Esophagus muscularis mucosa (tissue), 4 donors: ENCODE measurements at regions of chr2 and their contacts with region 1.

Region 1: GRCh38 chr2:41869542-41870264 is 178.1 kb upstream of the PKDCC start:
- DNase-seq: no peak
- H3K4me3 ChIP-seq: no peak overlapping the region
- H3K27ac ChIP-seq: no peak overlapping the region
- H3K4me1 ChIP-seq: peaks cover 0 to 21% (median 18%) of the 10 kb centered on the region in 4 donors
- H3K27me3 ChIP-seq: no peaks in the 10 kb centered on the region
- CTCF ChIP-seq: peak; percentile 87 to 89 (median 88)
- EP300 ChIP-seq: no peak
- POLR2A ChIP-seq: no peak

Region 2: GRCh38 chr2:41500895-41501294 is 368.8 kb before region 1 on chr2:
- intact Hi-C with region 1: no loop called
- DNase-seq: no peak
- H3K4me3 ChIP-seq: no peak overlapping the region
- H3K27ac ChIP-seq: no peak overlapping the region
- H3K4me1 ChIP-seq: no peaks in the 10 kb centered on the region
- H3K27me3 ChIP-seq: no peaks in the 10 kb centered on the region
- CTCF ChIP-seq: no peak
- EP300 ChIP-seq: no peak
- POLR2A ChIP-seq: no peak

Region 3: GRCh38 chr2:41579806-41580205 is 289.9 kb before region 1 on chr2:
- intact Hi-C with region 1: no loop called
- DNase-seq: no peak
- H3K4me3 ChIP-seq: no peak overlapping the region
- H3K27ac ChIP-seq: no peak overlapping the region
- H3K4me1 ChIP-seq: peaks cover 0 to 12% (median 0%) of the 10 kb centered on the region in 4 donors
- H3K27me3 ChIP-seq: no peaks in the 10 kb centered on the region
- CTCF ChIP-seq: no peak
- EP300 ChIP-seq: no peak
- POLR2A ChIP-seq: no peak

Region 4: DNA sequence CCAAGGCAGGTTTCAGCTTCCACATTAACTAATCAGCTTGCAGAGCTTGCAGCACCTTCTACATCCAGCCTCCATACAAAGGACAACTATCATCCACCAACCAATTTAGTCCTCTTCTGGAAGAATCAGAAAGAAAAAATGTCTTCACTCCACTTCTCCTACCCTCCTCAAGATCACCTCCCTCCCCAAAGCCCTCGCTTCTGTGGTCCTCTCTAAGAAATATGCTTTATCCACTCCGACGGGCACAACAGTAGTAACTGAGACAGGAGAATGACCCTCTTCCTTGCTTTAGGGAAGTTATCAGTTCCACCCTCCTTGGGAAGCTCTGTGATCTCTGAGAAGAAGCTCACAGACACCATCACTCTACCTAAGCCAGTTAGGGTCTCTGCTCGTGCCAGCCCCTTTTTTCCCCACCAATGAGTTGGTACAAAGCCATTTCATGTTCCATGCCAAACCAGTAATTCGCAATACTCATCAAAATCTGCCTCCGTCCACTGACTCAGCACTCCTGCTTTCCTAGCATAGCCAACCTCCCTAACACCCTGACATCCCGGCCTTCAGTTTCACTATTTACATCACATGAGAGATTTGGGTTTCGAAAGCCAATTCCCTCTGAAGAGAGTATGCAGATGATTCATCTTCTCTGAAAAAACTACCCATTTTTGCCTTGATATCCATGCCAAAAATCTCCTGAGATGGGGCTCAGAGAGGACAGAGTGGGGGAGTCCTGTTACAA is 64.0 kb after region 1 on chr2:
- intact Hi-C with region 1: no loop called
- DNase-seq: no peak
- H3K4me3 ChIP-seq: no peak overlapping the region
- H3K27ac ChIP-seq: peak overlapping the region; percentile 40 to 72 (median 44)
- H3K4me1 ChIP-seq: peaks cover 28 to 44% (median 35%) of the 10 kb centered on the region in 4 donors
- H3K27me3 ChIP-seq: no peaks in the 10 kb centered on the region
- CTCF ChIP-seq: no peak
- EP300 ChIP-seq: no peak
- POLR2A ChIP-seq: no peak

Region 5: GRCh38 chr2:42086500-42086953 is 216.8 kb after region 1 on chr2:
- intact Hi-C with region 1: loop called (anchors 1 kb)
- DNase-seq: no peak
- H3K4me3 ChIP-seq: no peak overlapping the region
- H3K27ac ChIP-seq: no peak overlapping the region
- H3K4me1 ChIP-seq: peaks cover 13 to 37% (median 35%) of the 10 kb centered on the region in 4 donors
- H3K27me3 ChIP-seq: no peaks in the 10 kb centered on the region
- CTCF ChIP-seq: peak; percentile 72 to 87 (median 79)
- EP300 ChIP-seq: no peak
- POLR2A ChIP-seq: no peak